Right cardiac atrium (tissue), 5 donors: ENCODE measurements at regions of chr11 and their contacts with region 1.

Region 1: DNA sequence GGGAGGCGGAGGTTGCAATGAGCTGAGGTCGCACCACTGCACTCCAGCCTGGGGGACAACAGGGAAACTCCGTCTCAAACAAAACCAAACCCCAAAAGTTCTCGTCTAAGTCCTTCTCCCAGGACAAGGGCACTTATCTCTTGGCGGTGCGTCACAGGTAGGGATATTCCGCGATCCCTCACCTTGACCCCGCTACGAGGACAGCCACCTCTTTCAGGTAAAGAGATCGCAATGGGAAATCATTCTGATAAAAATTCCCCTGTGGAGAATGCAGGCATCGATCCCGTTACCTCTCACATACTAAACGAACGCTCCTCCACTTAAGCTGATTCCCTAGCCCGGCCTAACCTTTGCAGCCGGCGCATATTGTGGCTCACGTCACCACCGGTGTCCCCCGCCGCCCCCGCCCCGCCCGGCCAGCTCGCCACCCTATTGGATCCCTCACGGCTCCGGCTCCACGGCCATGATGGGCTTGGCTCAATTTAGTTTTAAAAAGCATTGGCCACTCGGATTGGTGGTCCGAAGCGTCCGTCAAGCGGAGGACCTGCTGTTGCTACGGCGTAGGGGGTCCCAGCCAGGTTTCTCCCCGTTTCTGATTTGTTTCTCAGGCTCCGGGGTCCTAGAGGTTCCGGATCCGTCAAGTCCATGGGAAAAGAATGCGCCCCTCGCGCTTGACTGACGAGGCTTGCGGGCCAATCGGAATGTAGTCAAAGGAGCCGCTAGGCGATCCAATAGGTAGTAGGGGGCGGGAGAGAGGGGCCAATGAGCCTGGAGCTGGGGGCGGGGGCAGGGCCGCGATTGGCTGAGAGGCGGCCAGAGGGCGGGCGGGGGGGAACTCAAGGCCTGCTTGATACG is 439 bp upstream of the PPP6R3 start:
- DNase-seq: peak; percentile 98 to 99 (median 98)
- ATAC-seq: peak; percentile 95 to 96
- H3K4me3 ChIP-seq: peak overlapping the region; percentile 97
- H3K27ac ChIP-seq: peak overlapping the region; percentile 98
- H3K4me1 ChIP-seq: peaks cover 12% of the 10 kb centered on the region
- H3K27me3 ChIP-seq: no peaks in the 10 kb centered on the region

Region 2: GRCh38 chr11:68328374-68329091 is 131.6 kb before region 1 on chr11:
- intact Hi-C with region 1: no loop called
- DNase-seq: peak; percentile 55 to 86 (median 80)
- ATAC-seq: peak; percentile 12 to 48
- H3K4me3 ChIP-seq: no peak overlapping the region
- H3K27ac ChIP-seq: peak overlapping the region; percentile 58
- H3K4me1 ChIP-seq: peaks cover 38% of the 10 kb centered on the region
- H3K27me3 ChIP-seq: no peaks in the 10 kb centered on the region

Region 3: GRCh38 chr11:68503251-68503687 is 43.2 kb after region 1 on chr11:
- intact Hi-C with region 1: no loop called
- DNase-seq: no peak
- ATAC-seq: peak; percentile 65 to 89
- H3K4me3 ChIP-seq: no peak overlapping the region
- H3K27ac ChIP-seq: peak overlapping the region; percentile 15
- H3K4me1 ChIP-seq: peaks cover 24% of the 10 kb centered on the region
- H3K27me3 ChIP-seq: no peaks in the 10 kb centered on the region

Region 4: GRCh38 chr11:68550485-68550817 is 90.3 kb after region 1 on chr11:
- intact Hi-C with region 1: loop called in 1 of 4 experiments (anchors 10 kb)
- DNase-seq: peak in 1 of 3 donors; percentile 60
- ATAC-seq: peak in 1 of 2 donors; percentile 75
- H3K4me3 ChIP-seq: no peak overlapping the region
- H3K27ac ChIP-seq: no peak overlapping the region
- H3K4me1 ChIP-seq: peaks cover 6% of the 10 kb centered on the region
- H3K27me3 ChIP-seq: no peaks in the 10 kb centered on the region

Region 5: DNA sequence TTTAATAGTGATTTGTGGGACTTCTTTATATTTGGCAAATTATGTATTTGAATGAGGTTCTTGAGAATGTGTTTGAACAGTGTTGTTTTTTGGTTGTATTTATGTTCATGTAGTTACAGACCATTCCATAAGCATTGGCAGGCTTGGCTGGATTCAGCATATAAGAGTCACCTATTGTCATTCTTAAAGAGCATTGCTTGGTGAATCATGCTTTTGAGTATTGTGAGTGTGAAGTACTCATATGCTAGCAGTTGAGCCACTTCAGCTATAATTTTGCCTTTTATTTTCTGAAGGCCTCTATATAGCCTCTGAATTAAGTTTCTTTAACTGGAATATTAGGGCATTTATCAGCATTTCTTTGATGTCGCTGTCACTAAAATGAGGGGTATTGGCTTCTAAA is 114.2 kb after region 1 on chr11:
- intact Hi-C with region 1: loop called in 1 of 4 experiments (anchors 10 kb)
- DNase-seq: no peak
- ATAC-seq: no peak
- H3K4me3 ChIP-seq: no peak overlapping the region
- H3K27ac ChIP-seq: no peak overlapping the region
- H3K4me1 ChIP-seq: peaks cover 2% of the 10 kb centered on the region
- H3K27me3 ChIP-seq: no peaks in the 10 kb centered on the region